ENCODE measurements at regions of chr6 and their contacts with region 1.

Region 1: DNA sequence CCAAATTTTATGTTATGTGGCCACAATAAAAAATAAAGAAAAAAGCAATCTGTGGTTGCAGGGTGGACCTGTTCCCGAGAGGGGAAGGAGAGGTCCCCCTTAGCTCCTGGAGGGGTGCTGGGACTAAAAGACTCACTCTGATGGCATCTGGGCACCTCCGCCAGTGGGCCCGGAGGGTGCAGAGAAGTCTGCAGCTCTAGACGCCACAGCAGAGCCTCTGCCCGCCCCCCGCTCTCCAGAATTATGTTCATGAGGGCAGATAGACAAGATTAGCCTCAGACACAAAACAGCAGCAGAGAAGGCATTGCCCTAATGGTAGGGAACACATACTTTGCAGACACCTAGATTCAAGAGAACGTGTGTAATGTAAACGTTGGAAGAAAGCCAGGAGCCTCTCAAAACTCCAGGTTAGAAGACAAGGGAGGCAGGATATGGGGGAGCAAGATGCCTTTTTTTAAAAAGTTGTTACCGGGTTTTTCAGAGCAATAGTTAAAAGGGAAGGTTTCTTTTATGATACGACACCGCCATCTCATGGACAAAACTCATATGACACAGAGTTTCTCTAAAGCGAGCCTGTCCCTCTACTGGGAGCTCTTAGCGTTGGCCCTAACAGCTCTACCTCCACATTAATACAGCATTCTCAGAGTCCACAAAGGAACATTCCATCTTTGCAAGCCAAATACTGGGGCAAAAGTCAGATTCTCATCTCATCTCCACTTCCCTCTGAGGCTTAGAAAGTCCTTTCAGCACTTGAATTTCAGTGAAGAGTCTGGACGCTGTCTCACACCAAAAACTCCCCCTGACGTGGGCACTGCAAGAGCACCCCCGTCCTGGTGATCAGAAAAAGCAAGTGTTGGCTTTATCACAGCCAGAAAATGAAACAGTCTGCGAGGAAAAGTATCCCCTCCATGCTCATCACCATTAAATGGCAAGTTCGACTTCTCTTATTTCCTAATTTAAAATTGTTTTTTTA is 47.2 kb downstream of the FOXF2 start:
- DNase-seq: peak; percentile 89
- H3K4me3 Mint-ChIP-seq: no peak overlapping the region
- H3K27ac Mint-ChIP-seq: no peak overlapping the region
- H3K4me1 Mint-ChIP-seq: no peaks in the 10 kb centered on the region
- H3K27me3 Mint-ChIP-seq: peaks cover 23% of the 10 kb centered on the region

Region 2: GRCh38 chr6:1242446-1242845 is 194.2 kb before region 1 on chr6:
- intact Hi-C with region 1: no loop called
- DNase-seq: no peak
- H3K4me3 Mint-ChIP-seq: no peak overlapping the region
- H3K27ac Mint-ChIP-seq: no peak overlapping the region
- H3K4me1 Mint-ChIP-seq: no peaks in the 10 kb centered on the region
- H3K27me3 Mint-ChIP-seq: no peaks in the 10 kb centered on the region

Region 3: GRCh38 chr6:1396952-1397868 is 39.4 kb before region 1 on chr6:
- intact Hi-C with region 1: loop called (anchors 2 kb)
- DNase-seq: peak; percentile 91
- H3K4me3 Mint-ChIP-seq: no peak overlapping the region
- H3K27ac Mint-ChIP-seq: no peak overlapping the region
- H3K4me1 Mint-ChIP-seq: peaks cover 5% of the 10 kb centered on the region
- H3K27me3 Mint-ChIP-seq: peaks cover 54% of the 10 kb centered on the region

Region 4: GRCh38 chr6:1498491-1499113 is 62.0 kb after region 1 on chr6:
- intact Hi-C with region 1: no loop called
- DNase-seq: no peak
- H3K4me3 Mint-ChIP-seq: no peak overlapping the region
- H3K27ac Mint-ChIP-seq: no peak overlapping the region
- H3K4me1 Mint-ChIP-seq: no peaks in the 10 kb centered on the region
- H3K27me3 Mint-ChIP-seq: peaks cover 13% of the 10 kb centered on the region

Measured in activated CD4-positive, alpha-beta T cell treated with anti-CD3 and anti-CD28 coated beads, Interleukin-2, amount 10 ng/mL, durations not matched to agents 24 days and 14 days (primary cell).